ENCODE measurements at regions of chr2 and their contacts with region 1.

Region 1: GRCh38 chr2:173149491-173149890 is 73.8 kb downstream of the MAP3K20 start:
- DNase-seq: no peak
- ATAC-seq: no peak
- H3K4me3 ChIP-seq: no peak overlapping the region
- H3K27ac ChIP-seq: peak overlapping the region; percentile 91
- H3K4me1 ChIP-seq: peaks cover 68% of the 10 kb centered on the region
- H3K27me3 ChIP-seq: no peaks in the 10 kb centered on the region
- CTCF ChIP-seq: no peak

Region 2: GRCh38 chr2:172606285-172606684 is 543.2 kb before region 1 on chr2:
- CTCF ChIA-PET with region 1: no interaction called
- POLR2A ChIA-PET with region 1: no interaction called
- in situ Hi-C with region 1: no loop called
- intact Hi-C with region 1: no loop called
- DNase-seq: no peak
- ATAC-seq: no peak
- H3K4me3 ChIP-seq: no peak overlapping the region
- H3K27ac ChIP-seq: no peak overlapping the region
- H3K4me1 ChIP-seq: no peaks in the 10 kb centered on the region
- H3K27me3 ChIP-seq: no peaks in the 10 kb centered on the region
- CTCF ChIP-seq: no peak

Region 3: DNA sequence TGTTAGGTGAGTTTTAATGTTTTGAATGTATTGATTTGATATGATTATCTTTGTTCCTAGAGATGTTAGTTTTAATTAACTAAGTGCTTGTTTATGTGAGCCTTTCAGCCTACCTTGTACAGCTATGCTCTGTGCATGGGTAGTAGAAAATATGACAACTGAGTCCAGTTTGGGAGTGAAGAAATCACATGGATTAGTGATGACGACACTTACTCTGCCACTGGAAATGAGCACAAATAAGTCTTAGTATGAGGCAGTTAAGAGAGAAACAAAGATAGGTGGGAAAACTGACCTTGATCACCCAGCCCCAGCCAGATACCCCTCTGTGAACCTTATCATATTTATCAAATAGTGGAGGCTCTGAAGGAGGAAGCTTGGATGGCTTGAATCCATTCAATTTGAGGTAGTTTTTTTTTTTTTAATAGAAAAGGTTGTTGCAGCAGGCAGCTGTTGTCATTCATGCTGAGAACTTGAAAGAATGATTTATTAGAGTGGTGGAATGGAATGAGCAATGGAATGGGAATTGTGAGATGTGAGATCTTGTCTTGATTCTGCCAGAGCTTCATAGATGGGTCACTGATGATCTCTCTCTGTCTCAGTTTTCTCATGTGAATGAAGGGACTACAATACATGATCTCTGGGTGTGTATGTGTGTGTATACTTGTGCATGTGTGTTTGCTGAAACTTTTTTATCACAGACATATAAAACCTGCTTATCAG is 22.6 kb after region 1 on chr2:
- CTCF ChIA-PET with region 1: interaction called, 10 read pairs
- POLR2A ChIA-PET with region 1: interaction called, 5 read pairs
- in situ Hi-C with region 1: no loop called
- intact Hi-C with region 1: no loop called
- DNase-seq: no peak
- ATAC-seq: 0 out of 2 replicates have a peak, but pooled peaks have one; percentile 22
- H3K4me3 ChIP-seq: no peak overlapping the region
- H3K27ac ChIP-seq: peak overlapping the region; percentile 94
- H3K4me1 ChIP-seq: peaks cover 42% of the 10 kb centered on the region
- H3K27me3 ChIP-seq: no peaks in the 10 kb centered on the region
- CTCF ChIP-seq: no peak